ENCODE measurements at regions of chr2 and their contacts with region 1.

Region 1: GRCh38 chr2:98835831-98836385 is 100.1 kb downstream of the CRACDL start:
- DNase-seq: no peak
- H3K4me3 ChIP-seq: no peak overlapping the region
- H3K27ac ChIP-seq: no peak overlapping the region
- H3K4me1 ChIP-seq: no peaks in the 10 kb centered on the region; a peak in 1 of 4 replicates
- H3K27me3 ChIP-seq: no peaks in the 10 kb centered on the region; the same call in 1 of the 2 replicates
- CTCF ChIP-seq: no peak
- EP300 ChIP-seq: no peak
- RAD21 ChIP-seq: no peak

Region 2: DNA sequence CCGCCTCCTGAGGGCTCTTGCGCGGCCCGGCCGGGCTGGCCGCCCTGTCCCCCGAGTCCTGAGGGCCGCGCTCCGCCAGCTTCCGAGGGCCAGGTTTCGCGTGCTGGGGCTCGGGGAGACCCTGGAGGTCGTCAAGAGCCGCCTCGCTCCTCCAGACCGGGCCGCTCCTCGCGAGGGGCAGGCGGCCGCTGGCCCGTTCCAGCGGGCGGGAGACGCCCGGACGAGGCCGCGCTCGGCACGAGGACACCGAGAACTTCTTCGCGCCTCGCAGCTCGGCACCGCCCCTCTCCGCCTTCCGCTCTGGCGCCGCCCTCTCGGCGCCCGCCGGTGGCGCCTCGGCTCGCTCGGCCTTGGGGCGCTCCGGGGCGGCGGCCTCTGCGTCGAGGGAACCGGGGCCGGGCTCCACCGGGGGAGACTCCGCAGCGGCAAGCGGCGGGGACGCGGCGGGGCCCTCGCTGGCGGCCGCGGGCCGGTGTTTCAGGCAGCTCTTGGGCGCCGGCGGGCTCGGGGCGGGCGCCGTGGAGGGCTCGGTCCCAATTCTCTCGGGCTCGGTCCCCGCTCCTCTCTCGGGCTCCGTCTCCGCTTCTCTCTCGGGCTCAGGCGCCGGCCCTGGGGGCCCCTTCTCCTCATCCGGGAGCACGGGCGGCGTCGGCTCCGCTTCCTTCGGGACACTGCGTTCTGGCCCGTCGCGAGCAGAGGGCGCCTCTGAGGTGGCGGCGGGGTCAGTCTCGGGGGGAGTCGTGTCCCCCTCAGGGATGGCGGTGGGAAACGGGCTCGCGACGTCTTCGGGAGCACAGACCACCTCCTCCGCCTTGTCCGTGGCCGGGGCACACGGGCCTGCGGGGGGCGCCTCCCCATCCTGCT is 13.4 kb before region 1 on chr2:
- CTCF ChIA-PET with region 1: interaction called, 12 read pairs
- POLR2A ChIA-PET with region 1: no interaction called
- DNase-seq: peak; percentile 91
- H3K4me3 ChIP-seq: peak overlapping the region in 1 of 2 experiments; percentile 42; a peak in 2 of 4 replicates
- H3K27ac ChIP-seq: no peak overlapping the region
- H3K4me1 ChIP-seq: peaks cover 0 to 10% of the 10 kb centered on the region in 2 experiments; a peak in 1 of 4 replicates
- H3K27me3 ChIP-seq: peaks cover 10% of the 10 kb centered on the region; the same call in 1 of the 2 replicates
- CTCF ChIP-seq: no peak
- EP300 ChIP-seq: no peak
- RAD21 ChIP-seq: 0 out of 2 replicates have a peak, but pooled peaks have one; percentile 5

Region 3: GRCh38 chr2:98846041-98846440 is 10.1 kb after region 1 on chr2:
- CTCF ChIA-PET with region 1: interaction called, 18 read pairs
- POLR2A ChIA-PET with region 1: no interaction called
- DNase-seq: no peak
- H3K4me3 ChIP-seq: no peak overlapping the region
- H3K27ac ChIP-seq: no peak overlapping the region
- H3K4me1 ChIP-seq: peaks cover 0 to 5% of the 10 kb centered on the region in 2 experiments; a peak in 1 of 4 replicates
- H3K27me3 ChIP-seq: no peaks in the 10 kb centered on the region; the same call in 1 of the 2 replicates
- CTCF ChIP-seq: no peak
- EP300 ChIP-seq: no peak
- RAD21 ChIP-seq: no peak

Region 4: GRCh38 chr2:98861601-98862000 is 25.7 kb after region 1 on chr2:
- CTCF ChIA-PET with region 1: no interaction called
- POLR2A ChIA-PET with region 1: no interaction called
- DNase-seq: no peak
- H3K4me3 ChIP-seq: no peak overlapping the region
- H3K27ac ChIP-seq: no peak overlapping the region
- H3K4me1 ChIP-seq: no peaks in the 10 kb centered on the region; a peak in 1 of 4 replicates
- H3K27me3 ChIP-seq: no peaks in the 10 kb centered on the region
- CTCF ChIP-seq: no peak
- EP300 ChIP-seq: no peak
- RAD21 ChIP-seq: no peak

Region 5: DNA sequence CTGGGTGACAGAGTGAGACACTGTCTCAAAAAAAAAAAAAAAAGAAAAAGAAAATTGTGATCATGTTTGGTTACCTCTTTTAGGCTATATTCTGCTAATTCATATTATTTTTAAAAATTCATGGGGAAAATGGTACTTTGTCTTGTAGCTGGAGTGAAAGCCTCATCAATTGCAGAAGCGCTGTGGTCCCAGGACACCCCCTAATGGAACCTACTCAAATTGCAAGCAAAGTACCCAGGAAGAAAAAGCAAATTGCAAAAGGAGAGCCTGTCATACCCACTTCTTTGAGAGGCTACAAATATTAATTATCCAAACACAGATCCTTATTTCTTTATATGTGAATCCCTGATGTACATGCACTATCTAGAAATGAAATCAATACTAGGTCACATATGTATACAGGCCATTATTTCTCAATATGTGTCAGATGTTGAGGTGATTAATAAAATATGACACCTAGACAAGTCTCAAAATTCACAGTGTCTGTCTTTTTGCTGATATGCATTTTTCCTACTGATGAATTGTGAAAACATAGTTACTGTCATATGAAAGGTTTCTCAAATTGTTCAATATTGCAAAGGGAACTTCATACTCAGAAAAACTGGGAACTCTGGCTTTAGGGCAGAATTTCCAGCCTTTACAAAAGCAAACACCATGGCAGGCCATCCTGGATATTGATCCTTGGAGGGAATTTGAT is 87.5 kb after region 1 on chr2:
- CTCF ChIA-PET with region 1: no interaction called
- POLR2A ChIA-PET with region 1: no interaction called
- DNase-seq: no peak
- H3K4me3 ChIP-seq: no peak overlapping the region
- H3K27ac ChIP-seq: no peak overlapping the region
- H3K4me1 ChIP-seq: no peaks in the 10 kb centered on the region; a peak in 1 of 4 replicates
- H3K27me3 ChIP-seq: no peaks in the 10 kb centered on the region
- CTCF ChIP-seq: peak; percentile 17; the same call in 1 of the 2 replicates
- EP300 ChIP-seq: no peak
- RAD21 ChIP-seq: peak; percentile 17; the same call in 1 of the 2 replicates